BJ (cell line): ENCODE measurements at regions of chr22 and their contacts with region 1.

Region 1: GRCh38 chr22:32364210-32364609 is 6.5 kb downstream of the RFPL3 start:
- DNase-seq: no peak
- H3K4me3 ChIP-seq: no peak overlapping the region
- H3K27me3 ChIP-seq: peaks cover 3% of the 10 kb centered on the region; the same call in 1 of the 2 replicates
- CTCF ChIP-seq: no peak

Region 2: DNA sequence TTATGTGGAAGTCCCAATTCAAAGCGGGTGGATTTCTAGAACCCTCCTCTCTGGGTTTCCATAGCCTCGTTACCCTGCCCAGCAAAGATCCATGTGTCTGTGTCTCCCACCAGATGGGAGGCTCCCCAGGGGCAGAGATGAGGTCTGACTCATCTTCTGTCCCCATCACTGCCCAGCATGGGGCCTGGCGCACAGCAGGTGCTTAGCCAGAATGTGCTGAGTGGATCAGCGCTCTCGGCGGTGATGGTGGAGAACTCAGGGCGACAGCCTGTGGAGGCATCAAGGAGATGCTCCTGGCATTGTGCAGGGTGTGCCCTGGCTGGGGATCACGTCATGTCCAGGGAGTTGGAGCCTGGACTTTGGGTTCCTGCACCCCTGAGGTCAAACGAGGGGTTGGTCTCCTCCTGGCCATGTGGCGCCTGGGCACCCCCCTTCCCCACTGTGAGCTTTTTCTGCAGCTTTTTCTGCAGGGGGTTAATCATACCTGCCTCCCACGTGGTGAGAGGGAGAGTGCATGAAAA is 52.6 kb before region 1 on chr22:
- CTCF ChIA-PET with region 1: no interaction called
- POLR2A ChIA-PET with region 1: interaction called, 23 read pairs
- DNase-seq: no peak
- H3K4me3 ChIP-seq: no peak overlapping the region
- H3K27me3 ChIP-seq: no peaks in the 10 kb centered on the region
- CTCF ChIP-seq: no peak

Region 3: GRCh38 chr22:32378707-32379272 is 14.6 kb after region 1 on chr22:
- CTCF ChIA-PET with region 1: no interaction called
- POLR2A ChIA-PET with region 1: no interaction called
- DNase-seq: no peak
- H3K4me3 ChIP-seq: no peak overlapping the region
- H3K27me3 ChIP-seq: no peaks in the 10 kb centered on the region
- CTCF ChIP-seq: peak; percentile 52